Gastrocnemius medialis (tissue), 4 donors: ENCODE measurements at regions of chr14 and their contacts with region 1.

Region 1: DNA sequence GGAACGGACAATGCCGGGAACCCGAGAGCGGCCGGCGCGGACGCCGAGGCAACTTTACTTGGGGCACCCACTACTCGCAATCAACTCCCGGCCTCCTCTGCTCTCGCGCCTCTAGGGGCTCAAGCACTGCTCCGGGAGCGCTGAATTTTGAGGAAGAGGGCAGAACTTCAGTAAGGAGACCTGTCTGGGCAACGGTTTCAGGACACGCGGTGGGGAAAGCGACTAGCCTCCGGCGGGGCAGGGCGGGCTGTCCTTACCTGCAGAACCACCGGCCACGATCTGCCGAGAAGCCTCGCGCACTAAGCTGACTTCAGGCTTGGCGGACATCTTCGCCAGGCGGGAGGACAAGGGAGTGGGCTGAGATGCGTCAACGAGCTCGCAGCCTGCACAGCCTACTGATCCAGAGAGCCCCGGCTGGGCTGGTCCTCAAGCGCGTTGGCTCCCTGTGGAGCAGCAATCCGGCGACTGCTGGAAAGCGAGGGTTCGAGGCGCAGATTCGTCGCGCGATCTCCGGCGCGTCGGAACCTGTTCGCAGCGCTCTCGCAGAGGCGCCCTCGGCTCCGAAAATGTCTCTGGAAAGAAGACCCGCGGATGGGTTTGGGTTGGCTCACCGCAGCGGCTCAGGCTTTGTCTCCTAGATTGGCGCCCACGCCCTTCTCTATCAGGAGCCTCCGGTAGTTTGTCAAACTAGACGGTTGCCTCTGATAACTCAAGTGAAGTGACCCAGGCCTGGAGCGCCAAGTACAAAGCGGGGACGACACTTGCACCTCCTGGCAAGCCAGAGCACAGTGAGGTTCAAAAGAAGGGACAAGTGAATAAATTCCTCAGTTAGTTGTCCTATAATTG is at the start of gene SLC25A21:
- DNase-seq: peak; percentile 34 to 67
- ATAC-seq: peak; percentile 93 to 95
- H3K4me3 ChIP-seq: peak within 1 kb of the TSS; percentile 80 to 95 (median 86)
- H3K27ac ChIP-seq: peak within 1 kb of the TSS; percentile 74 to 94 (median 86)
- H3K4me1 ChIP-seq: peaks cover 15 to 31% of the 10 kb centered on the region in 2 donors
- H3K27me3 ChIP-seq: no peaks in the 10 kb centered on the region
- CTCF ChIP-seq: peak in 1 of 5 experiments; percentile 32
- POLR2A ChIP-seq: peak in 1 of 2 donors; percentile 42
- total RNA-seq, gene SLC25A21: 1.9 TPM in 1 of 4 donors, not detected in the others

Region 2: DNA sequence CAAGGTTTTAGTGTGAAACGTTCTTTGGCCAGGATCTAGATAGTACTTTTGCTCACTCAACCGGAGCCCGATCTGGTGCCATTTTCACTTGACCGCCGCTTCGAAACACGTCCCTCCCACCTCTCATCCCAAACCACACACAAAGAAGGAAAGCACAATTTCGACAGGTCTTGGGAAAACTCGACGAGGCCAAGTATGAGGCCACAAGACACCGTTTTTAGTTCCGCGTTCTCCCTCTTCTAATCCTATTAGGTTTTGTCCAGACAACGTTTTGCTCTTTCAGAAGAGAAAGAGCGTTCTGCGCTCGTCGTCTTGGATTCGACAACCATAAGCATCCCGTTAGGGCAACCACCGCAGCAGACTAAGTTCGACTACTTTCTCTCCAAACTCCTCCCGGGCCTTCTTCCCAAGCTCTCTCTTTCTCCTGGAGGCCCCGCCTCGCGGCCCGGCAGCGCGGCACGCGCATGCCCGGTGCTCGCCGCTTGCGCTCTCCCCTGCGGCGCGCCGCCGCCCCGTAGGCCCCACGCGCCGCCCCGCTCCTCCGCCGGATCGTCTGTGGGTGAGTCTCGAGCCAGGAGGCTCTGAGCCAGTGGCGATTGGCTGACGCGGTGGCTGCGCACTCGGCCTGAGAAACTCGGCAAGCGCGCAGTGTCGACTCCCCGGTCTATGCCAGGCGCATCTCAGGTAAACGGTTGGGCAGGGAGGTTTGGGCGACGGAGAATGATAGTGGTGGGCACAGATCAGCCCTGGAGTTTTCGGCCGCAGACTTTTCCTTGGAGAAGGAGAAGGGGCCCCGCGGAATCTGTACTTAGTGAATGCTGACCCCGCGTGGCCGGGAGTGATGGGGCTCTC is 25.4 kb after region 1 on chr14 and contains the start of gene MIPOL1:
- in situ Hi-C with region 1: no loop called
- intact Hi-C with region 1: loop called (anchors 1 kb)
- DNase-seq: peak; percentile 59 to 81
- ATAC-seq: peak; percentile 93
- H3K4me3 ChIP-seq: peak within 1 kb of the TSS; percentile 70 to 89 (median 73)
- H3K27ac ChIP-seq: peak within 1 kb of the TSS; percentile 84 to 93 (median 88)
- H3K4me1 ChIP-seq: peaks cover 8 to 10% of the 10 kb centered on the region in 2 donors
- H3K27me3 ChIP-seq: no peaks in the 10 kb centered on the region
- CTCF ChIP-seq: peak in 4 of 5 experiments; percentile 9 to 44 (median 22)
- POLR2A ChIP-seq: peak; percentile 39 to 42
- total RNA-seq, gene MIPOL1: 3.1 to 13.7 (median 4.1) TPM

Region 3: DNA sequence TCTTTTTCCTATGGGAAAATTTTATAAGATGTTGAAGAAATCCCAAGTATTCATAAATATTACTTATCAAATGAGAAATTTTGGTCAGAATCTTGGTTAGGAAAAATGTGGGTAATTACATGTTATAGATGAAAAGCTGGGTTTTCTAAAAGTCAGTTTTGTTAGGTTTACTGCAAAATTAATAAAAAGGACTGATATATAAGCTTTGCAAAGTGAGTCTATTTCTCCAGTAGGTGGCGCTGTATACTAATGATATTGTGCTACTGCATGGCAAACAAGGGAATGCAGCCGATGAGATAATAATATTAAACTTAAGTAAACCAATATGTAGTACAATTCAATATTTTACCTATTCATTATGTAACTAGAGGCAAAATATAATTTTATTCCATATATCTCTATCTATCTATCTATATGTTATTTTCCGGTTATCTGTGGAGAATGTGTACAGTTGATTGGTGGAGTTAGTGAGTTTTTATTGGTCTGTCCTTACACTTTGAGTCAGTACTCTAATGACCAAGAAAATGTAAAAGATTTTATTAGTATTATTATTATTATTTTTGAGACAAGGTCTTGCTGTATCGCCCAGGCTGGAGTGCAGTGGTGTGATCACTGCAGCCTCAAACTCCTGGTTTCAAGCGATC is 58.4 kb after region 1 on chr14:
- in situ Hi-C with region 1: no loop called
- intact Hi-C with region 1: loop called (anchors 2 kb)
- DNase-seq: no peak
- ATAC-seq: peak in 1 of 2 donors; percentile 55
- H3K4me3 ChIP-seq: no peak overlapping the region
- H3K27ac ChIP-seq: no peak overlapping the region
- H3K4me1 ChIP-seq: no peaks in the 10 kb centered on the region
- H3K27me3 ChIP-seq: no peaks in the 10 kb centered on the region
- CTCF ChIP-seq: peak in 4 of 5 experiments; percentile 43 to 76 (median 56)
- POLR2A ChIP-seq: no peak

Region 4: DNA sequence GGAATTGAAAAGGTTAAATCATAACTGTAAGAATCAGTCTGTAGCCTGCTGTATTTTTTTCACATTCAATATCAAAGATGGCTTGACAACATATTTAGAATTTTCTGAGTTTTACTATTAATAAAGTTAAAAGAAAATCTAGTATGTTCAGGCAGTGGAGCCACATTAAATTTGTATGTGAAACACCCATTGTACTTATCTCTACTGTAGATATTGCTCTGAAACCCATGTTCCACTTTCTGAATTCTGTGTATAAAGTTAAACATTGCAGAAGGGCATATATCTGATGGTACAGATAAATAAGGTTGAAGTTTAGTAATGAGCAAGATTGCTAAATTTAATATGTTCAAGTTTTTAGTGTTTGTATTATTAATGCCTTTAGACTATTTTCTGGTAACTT is 250.1 kb after region 1 on chr14:
- in situ Hi-C with region 1: no loop called
- intact Hi-C with region 1: no loop called
- DNase-seq: no peak
- ATAC-seq: no peak
- H3K4me3 ChIP-seq: no peak overlapping the region
- H3K27ac ChIP-seq: no peak overlapping the region
- H3K4me1 ChIP-seq: no peaks in the 10 kb centered on the region
- H3K27me3 ChIP-seq: no peaks in the 10 kb centered on the region
- CTCF ChIP-seq: no peak
- POLR2A ChIP-seq: no peak